Activated CD4-positive, alpha-beta memory T cell treated with anti-CD3 and anti-CD28 coated beads for 36 hours (primary cell): ENCODE measurements at regions of chr10 and their contacts with region 1.

Region 1: DNA sequence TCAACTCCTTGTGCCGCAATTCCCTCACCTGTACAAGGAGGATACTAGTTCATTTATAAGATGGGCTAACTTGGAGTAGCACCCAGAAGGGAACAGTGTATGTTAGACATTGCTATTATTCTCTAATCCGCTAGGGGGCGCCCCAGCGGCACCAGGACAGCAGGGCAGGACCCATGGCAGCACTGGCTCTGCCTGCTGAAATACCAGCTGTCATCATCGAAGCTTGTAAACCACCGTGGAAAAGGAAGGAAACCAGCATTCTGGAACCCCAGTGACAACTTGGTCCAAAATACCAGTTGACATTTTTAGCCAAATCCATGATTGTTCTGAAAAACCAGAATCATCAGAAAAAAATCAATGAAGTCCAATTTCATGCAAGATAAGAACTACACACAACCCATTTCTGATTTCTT is 134.4 kb downstream of the ITGA8 start:
- DNase-seq: peak; percentile 61
- H3K4me3 Mint-ChIP-seq: no peak overlapping the region
- H3K27ac Mint-ChIP-seq: no peak overlapping the region
- H3K4me1 Mint-ChIP-seq: no peaks in the 10 kb centered on the region
- H3K27me3 Mint-ChIP-seq: peaks cover 9% of the 10 kb centered on the region

Region 2: DNA sequence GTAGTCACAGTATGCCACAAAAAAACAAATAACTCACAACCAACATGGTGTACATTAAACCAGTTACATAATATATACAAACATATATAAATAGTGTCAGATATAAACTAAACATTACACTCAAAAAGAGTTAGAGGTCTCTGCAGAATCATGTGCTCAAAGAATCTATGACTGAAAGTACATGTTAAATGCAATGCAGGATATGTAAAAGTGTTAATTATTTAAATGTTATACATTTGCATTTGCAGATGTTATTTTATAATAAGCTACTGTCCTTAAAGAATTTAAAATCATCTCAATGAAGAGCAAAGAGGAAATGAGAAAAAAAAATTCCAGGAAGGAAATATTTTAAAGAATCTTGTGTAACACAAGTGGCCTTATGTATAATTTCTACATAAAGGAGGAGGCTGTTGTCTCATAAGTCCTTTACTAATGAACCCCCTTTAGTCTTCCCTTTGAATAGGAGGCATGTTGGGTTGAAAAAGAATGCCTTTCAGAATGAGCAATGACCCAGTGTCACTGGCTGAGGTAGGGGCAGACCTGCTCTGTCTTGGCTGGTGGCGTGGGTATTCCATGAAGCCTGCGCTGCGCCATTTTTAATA is 14.5 kb before region 1 on chr10:
- CTCF ChIA-PET with region 1: no interaction called
- POLR2A ChIA-PET with region 1: no interaction called
- intact Hi-C with region 1: no loop called
- DNase-seq: no peak
- H3K4me3 Mint-ChIP-seq: no peak overlapping the region
- H3K27ac Mint-ChIP-seq: no peak overlapping the region
- H3K4me1 Mint-ChIP-seq: no peaks in the 10 kb centered on the region
- H3K27me3 Mint-ChIP-seq: peaks cover 3% of the 10 kb centered on the region

Region 3: DNA sequence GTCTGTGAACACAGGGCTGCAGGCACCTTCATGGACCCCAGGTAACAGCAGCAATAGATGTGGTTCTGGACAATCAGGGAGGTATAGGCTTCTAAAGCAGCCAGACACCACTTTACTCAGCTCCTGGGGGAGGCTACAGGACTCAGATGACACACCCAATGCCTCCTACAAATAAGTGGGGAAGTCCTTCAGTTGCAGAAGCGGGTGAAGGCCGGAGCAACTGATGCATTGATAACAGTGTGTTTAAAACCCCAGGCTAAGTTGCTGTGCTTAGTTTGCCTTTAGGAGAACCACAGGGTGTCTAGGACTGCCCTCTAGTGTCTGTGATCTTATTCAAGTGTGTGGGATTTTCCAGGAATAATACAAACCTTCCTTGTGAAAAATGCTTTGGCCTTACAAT is 140.3 kb after region 1 on chr10:
- CTCF ChIA-PET with region 1: no interaction called
- POLR2A ChIA-PET with region 1: no interaction called
- intact Hi-C with region 1: loop called (anchors 10 kb)
- DNase-seq: no peak
- H3K4me3 Mint-ChIP-seq: no peak overlapping the region
- H3K27ac Mint-ChIP-seq: no peak overlapping the region
- H3K4me1 Mint-ChIP-seq: no peaks in the 10 kb centered on the region
- H3K27me3 Mint-ChIP-seq: peaks cover 15% of the 10 kb centered on the region

Region 4: DNA sequence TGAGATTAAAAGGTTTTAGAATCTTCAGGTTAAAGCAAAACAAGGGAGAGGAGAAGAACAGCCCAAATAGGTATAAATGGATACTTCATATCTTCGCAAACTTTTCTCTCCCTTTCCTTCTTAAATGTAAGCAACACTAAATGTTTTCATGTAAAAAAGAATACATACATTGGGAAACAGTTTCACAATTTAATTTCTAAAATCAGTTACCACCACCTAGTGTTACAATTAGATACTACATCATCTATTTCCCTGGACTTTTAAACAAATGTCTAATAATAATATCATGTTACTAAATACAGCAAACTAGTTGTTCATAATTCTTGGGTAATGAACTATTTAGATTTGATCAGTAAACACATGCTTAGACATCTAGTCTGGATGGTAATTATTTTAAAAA is 239.2 kb after region 1 on chr10:
- CTCF ChIA-PET with region 1: no interaction called
- POLR2A ChIA-PET with region 1: no interaction called
- intact Hi-C with region 1: loop called (anchors 10 kb)
- DNase-seq: no peak
- H3K4me3 Mint-ChIP-seq: no peak overlapping the region
- H3K27ac Mint-ChIP-seq: no peak overlapping the region
- H3K4me1 Mint-ChIP-seq: peaks cover under 1% of the 10 kb centered on the region
- H3K27me3 Mint-ChIP-seq: no peaks in the 10 kb centered on the region

Region 5: DNA sequence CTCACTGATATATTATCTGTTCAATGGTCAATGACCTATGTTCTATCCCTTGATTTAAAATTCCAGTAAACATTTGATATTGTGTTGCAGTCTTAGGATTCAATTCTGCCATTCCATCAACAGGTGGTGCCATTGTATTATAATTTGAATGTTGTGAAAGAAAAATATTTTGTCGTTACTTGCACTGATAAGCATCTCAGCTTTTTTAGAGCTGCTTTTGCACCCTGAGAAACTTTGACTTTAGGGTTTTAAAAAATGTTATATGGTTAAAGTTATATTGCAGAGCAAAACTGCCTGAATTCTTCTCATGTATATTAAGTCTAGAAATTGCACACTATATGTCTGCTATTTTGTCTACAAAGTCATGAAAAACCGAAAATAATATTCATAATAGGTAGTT is 293.7 kb after region 1 on chr10:
- CTCF ChIA-PET with region 1: no interaction called
- POLR2A ChIA-PET with region 1: no interaction called
- intact Hi-C with region 1: no loop called
- DNase-seq: no peak
- H3K4me3 Mint-ChIP-seq: no peak overlapping the region
- H3K27ac Mint-ChIP-seq: no peak overlapping the region
- H3K4me1 Mint-ChIP-seq: no peaks in the 10 kb centered on the region
- H3K27me3 Mint-ChIP-seq: peaks cover 45% of the 10 kb centered on the region